Adrenal gland (tissue), 19 donors: ENCODE measurements at regions of chr10 and their contacts with region 1.

Region 1: DNA sequence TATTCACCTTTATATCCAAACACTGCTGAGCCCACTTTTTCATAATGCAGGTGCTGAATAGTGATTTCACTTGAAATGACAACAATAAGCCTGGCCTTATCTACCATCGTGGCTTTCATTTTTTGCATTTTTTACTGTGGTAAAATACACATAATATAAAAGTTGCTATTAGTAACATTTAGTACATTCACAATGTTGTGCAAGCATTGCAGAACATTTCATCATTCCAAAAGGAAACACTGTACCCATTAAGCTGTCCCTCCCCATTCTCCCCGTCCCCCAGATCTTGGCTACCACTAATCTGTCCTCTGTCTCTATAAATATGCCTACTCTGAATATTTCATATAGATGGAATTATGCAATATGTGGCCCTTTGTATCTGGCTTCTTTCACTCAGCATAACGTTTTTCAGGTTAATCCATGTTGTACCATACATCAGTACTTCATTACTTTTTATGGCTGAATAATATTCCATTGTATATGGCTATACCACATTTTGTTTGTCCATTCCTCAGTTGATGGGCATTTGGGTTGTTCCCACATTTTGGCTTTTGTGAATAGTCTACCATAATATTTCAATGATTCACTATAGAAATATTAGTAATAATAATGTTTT is 68.5 kb upstream of the ARID5B start:
- DNase-seq: no peak
- H3K4me3 ChIP-seq: no peak overlapping the region
- H3K27ac ChIP-seq: no peak overlapping the region
- H3K4me1 ChIP-seq: peaks cover 27 to 28% of the 10 kb centered on the region in 2 donors
- H3K27me3 ChIP-seq: no peaks in the 10 kb centered on the region
- CTCF ChIP-seq: no peak
- POLR2A ChIP-seq: no peak

Region 2: GRCh38 chr10:61750929-61751471 is 82.0 kb before region 1 on chr10:
- intact Hi-C with region 1: loop called in 1 of 2 experiments (anchors 5 kb)
- DNase-seq: peak; percentile 78 to 91 (median 85)
- H3K4me3 ChIP-seq: no peak overlapping the region
- H3K27ac ChIP-seq: no peak overlapping the region
- H3K4me1 ChIP-seq: peaks cover 11 to 19% of the 10 kb centered on the region in 2 donors
- H3K27me3 ChIP-seq: no peaks in the 10 kb centered on the region
- CTCF ChIP-seq: peak; percentile 65 to 83 (median 80)
- POLR2A ChIP-seq: no peak